Naive thymus-derived CD4-positive, alpha-beta T cell (primary cell): ENCODE measurements at regions of chr1 and their contacts with region 1.

Region 1: DNA sequence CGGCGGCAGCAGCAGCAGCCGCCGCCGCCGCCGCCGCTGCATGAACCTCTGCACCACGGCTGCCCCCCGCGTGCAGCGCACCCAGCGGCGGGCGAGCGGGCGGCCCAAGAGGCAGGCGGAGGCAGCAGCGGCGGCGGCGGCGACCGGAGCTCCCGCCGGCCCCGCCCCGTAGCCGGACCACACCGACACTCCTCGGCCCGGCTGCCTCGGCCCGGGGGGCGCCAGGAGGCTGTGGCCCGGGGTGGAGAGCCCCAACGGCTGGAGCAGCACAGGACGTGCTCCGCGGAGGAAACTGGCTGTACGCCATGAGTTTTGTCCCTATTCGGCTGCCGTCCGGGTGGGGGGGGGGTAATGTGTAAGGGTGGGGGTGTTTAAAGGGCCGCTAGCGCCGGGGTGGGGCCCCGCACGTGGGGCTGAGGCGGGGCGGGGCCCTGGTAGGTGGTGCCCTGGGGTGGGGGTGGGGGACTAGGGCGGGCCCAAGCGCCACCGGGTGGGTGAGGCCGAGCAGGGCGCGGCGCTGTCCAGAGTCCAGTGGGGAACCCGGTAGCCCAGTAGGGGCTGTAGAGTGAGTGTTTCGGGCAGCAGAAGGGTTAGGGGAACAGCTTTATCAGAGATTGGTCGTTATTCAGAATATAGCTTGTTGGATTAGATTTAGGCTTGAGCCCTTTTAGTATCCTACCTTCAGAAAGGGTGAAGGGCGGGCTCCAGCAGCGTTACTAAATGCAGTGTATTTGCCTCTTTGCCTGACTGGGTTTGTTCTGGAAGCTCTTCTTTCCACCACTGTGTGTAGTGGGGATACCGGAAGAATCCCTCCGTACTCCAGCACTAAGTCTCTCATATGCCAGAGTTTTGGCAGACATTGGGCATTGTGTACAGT is at the start of gene FAM78B:
- DNase-seq: peak in 7 of 9 donors; percentile 5 to 59 (median 25)
- ATAC-seq: peak; percentile 67
- H3K4me3 ChIP-seq: no peak within 1 kb of the TSS
- H3K4me3 Mint-ChIP-seq: peak within 1 kb of the TSS; percentile 62 to 85 (median 78)
- H3K27ac ChIP-seq: no peak within 1 kb of the TSS
- H3K27ac Mint-ChIP-seq: no peak within 1 kb of the TSS
- H3K4me1 ChIP-seq: peaks cover 0 to 7% of the 10 kb centered on the region in 2 donors
- H3K4me1 Mint-ChIP-seq: peaks cover 4 to 25% (median 21%) of the 10 kb centered on the region in 7 donors
- H3K27me3 ChIP-seq: peaks cover 0 to 4% of the 10 kb centered on the region in 2 donors
- H3K27me3 Mint-ChIP-seq: peaks cover 32 to 61% (median 48%) of the 10 kb centered on the region in 5 donors
- total RNA-seq, gene FAM78B: 0.45 to 0.58 TPM in 2 of 5 experiments, not detected in the others

Region 2: GRCh38 chr1:166032572-166033371 is 134.2 kb before region 1 on chr1:
- CTCF ChIA-PET with region 1: no interaction called
- POLR2A ChIA-PET with region 1: no interaction called
- intact Hi-C with region 1: no loop called
- DNase-seq: no peak
- ATAC-seq: no peak
- H3K4me3 ChIP-seq: no peak overlapping the region
- H3K4me3 Mint-ChIP-seq: no peak overlapping the region
- H3K27ac ChIP-seq: no peak overlapping the region
- H3K27ac Mint-ChIP-seq: no peak overlapping the region
- H3K4me1 ChIP-seq: no peaks in the 10 kb centered on the region
- H3K4me1 Mint-ChIP-seq: peaks cover 0 to 6% (median 0%) of the 10 kb centered on the region in 7 donors
- H3K27me3 ChIP-seq: no peaks in the 10 kb centered on the region
- H3K27me3 Mint-ChIP-seq: peaks cover under 1 to 44% (median 10%) of the 10 kb centered on the region in 5 donors

Region 3: GRCh38 chr1:166083887-166084286 is 83.0 kb before region 1 on chr1:
- CTCF ChIA-PET with region 1: no interaction called
- POLR2A ChIA-PET with region 1: no interaction called
- intact Hi-C with region 1: loop called in 1 of 2 experiments (anchors 5 kb)
- DNase-seq: peak in 1 of 9 donors; percentile 4
- ATAC-seq: no peak
- H3K4me3 ChIP-seq: no peak overlapping the region
- H3K4me3 Mint-ChIP-seq: peak overlapping the region in 2 of 10 donors; percentile 34 to 57
- H3K27ac ChIP-seq: no peak overlapping the region
- H3K27ac Mint-ChIP-seq: peak overlapping the region in 1 of 9 donors; percentile 44
- H3K4me1 ChIP-seq: peaks cover 5% of the 10 kb centered on the region in 2 donors
- H3K4me1 Mint-ChIP-seq: peaks cover 4 to 33% (median 26%) of the 10 kb centered on the region in 7 donors
- H3K27me3 ChIP-seq: no peaks in the 10 kb centered on the region
- H3K27me3 Mint-ChIP-seq: peaks cover 0 to 10% (median 0%) of the 10 kb centered on the region in 5 donors